ENCODE measurements at regions of chr5 and their contacts with region 1.

Region 1: GRCh38 chr5:150560401-150561193 is 52.7 kb downstream of the NDST1 start:
- DNase-seq: peak; percentile 82
- ATAC-seq: peak; percentile 74
- H3K4me3 ChIP-seq: no peak overlapping the region
- H3K27ac ChIP-seq: no peak overlapping the region
- H3K4me1 ChIP-seq: peaks cover 25% of the 10 kb centered on the region
- H3K27me3 ChIP-seq: no peaks in the 10 kb centered on the region
- CTCF ChIP-seq: peak; percentile 81
- EP300 ChIP-seq: no peak
- POLR2A ChIP-seq: no peak
- RAD21 ChIP-seq: peak; percentile 72

Region 2: DNA sequence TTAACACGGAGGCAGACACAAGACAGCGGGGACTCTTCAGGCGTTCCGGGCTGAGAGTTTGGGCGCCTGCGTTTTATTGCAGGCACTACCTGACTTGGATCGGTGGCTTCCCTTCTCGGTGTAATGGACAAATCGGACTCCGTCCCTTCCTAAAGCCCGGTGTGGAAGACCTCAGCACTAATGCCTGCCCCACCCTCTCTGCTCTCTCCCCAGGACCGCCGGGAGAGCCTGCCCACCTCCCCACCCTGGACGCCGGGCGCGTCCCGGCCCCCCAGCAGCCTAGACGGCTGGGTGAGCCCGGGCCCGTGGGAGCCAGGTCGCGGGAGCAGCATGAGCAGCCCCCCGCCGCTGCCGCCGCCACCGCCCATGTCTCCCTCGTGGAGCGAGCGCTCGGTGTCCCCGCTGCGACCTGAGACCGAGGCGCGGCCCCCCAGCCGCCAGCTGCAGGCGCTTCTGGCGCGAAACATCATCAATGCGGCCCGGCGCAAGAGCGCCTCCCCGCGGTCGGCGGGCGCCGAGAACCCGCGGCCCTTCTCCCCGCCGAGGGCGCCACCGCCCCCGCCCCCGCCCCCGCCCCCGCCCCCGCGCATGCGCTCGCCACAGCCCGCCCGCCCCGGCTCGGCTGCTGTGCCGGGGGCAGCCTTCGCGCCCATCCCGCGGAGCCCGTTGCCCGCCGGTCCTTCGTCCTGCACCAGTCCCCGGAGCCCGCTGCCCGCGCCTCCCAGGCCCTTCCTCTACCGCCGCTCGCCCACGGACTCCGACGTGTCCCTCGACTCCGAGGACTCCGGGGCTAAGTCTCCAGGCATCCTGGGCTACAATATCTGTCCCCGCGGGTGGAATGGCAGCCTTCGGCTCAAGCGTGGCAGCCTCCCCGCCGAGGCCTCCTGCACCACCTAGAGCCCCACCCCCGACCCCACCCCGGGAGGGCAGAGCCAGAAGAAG is 95.9 kb after region 1 on chr5:
- CTCF ChIA-PET with region 1: interaction called, 16 read pairs
- POLR2A ChIA-PET with region 1: no interaction called
- in situ Hi-C with region 1: loop called (anchors 5 kb)
- intact Hi-C with region 1: loop called (anchors 1 kb)
- DNase-seq: peak; percentile 35
- ATAC-seq: peak; percentile 61
- H3K4me3 ChIP-seq: peak overlapping the region; percentile 49 to 75 (median 60)
- H3K27ac ChIP-seq: no peak overlapping the region
- H3K4me1 ChIP-seq: peaks cover 18% of the 10 kb centered on the region
- H3K27me3 ChIP-seq: peaks cover 2 to 21% of the 10 kb centered on the region in 2 experiments; a peak in 2 of 5 replicates
- CTCF ChIP-seq: peak; percentile 78
- EP300 ChIP-seq: no peak
- POLR2A ChIP-seq: no peak
- RAD21 ChIP-seq: peak; percentile 87

Region 3: DNA sequence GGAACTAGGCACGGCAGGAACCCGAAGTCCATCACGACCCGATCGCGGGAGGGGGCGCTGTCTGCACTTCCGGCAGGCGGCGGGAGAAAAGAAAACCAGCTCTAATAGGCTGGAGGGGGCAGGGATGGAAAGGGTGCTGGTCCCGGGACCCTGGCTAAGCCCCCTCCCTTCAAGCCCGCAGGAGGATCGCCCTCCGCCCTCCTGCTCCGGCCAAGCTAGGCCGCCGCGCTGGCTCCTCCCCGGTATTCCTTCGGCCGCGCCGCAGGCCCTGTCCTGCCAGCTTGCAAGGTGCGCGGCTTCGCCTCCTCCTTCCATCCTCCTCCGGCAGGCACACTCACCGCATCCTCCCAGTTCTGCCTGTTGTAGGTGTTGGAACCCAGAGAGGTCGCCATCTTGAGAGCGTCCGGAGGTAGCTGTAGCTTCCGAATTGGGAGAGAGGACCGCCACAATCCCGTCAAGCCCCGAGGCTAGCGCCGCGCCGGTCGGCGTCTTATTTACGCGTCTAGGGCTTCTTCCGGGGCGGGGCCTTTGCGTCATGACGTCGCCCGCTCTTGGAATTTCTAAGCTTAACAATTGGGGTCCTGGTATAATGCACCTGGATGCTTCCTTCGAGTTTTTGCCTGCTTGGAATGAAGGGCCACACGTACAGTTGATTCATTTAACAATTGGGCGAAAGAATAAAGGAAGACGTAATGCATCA is 140.1 kb after region 1 on chr5 and contains the start of gene RBM22:
- CTCF ChIA-PET with region 1: interaction called, 5 read pairs
- POLR2A ChIA-PET with region 1: interaction called, 3 read pairs
- in situ Hi-C with region 1: no loop called
- intact Hi-C with region 1: loop called (anchors 2 kb)
- DNase-seq: peak; percentile 77
- ATAC-seq: peak; percentile 97
- H3K4me3 ChIP-seq: peak within 1 kb of the TSS; percentile 97 to 100 (median 99)
- H3K27ac ChIP-seq: peak within 1 kb of the TSS; percentile 84
- H3K4me1 ChIP-seq: peaks cover 21% of the 10 kb centered on the region
- H3K27me3 ChIP-seq: no peaks in the 10 kb centered on the region; a peak in 1 of 5 replicates
- CTCF ChIP-seq: peak; percentile 72
- EP300 ChIP-seq: 0 out of 4 replicates have a peak, but pooled peaks of 1 of the 2 experiments have one; percentile 19
- POLR2A ChIP-seq: peak; percentile 73 to 85
- RAD21 ChIP-seq: peak; percentile 7; the same call in 1 of the 2 replicates
- total RNA-seq, gene RBM22: 27.7 and 28.3 TPM in 2 replicates

Region 4: GRCh38 chr5:150710165-150710564 is 149.6 kb after region 1 on chr5:
- CTCF ChIA-PET with region 1: interaction called, 11 read pairs
- POLR2A ChIA-PET with region 1: no interaction called
- in situ Hi-C with region 1: no loop called
- intact Hi-C with region 1: loop called (anchors 2 kb)
- DNase-seq: no peak
- ATAC-seq: peak; percentile 49; the same call in 2 of the 3 replicates
- H3K4me3 ChIP-seq: no peak overlapping the region
- H3K27ac ChIP-seq: no peak overlapping the region
- H3K4me1 ChIP-seq: no peaks in the 10 kb centered on the region
- H3K27me3 ChIP-seq: no peaks in the 10 kb centered on the region
- CTCF ChIP-seq: peak; percentile 49
- EP300 ChIP-seq: no peak
- POLR2A ChIP-seq: no peak
- RAD21 ChIP-seq: no peak

Region 5: DNA sequence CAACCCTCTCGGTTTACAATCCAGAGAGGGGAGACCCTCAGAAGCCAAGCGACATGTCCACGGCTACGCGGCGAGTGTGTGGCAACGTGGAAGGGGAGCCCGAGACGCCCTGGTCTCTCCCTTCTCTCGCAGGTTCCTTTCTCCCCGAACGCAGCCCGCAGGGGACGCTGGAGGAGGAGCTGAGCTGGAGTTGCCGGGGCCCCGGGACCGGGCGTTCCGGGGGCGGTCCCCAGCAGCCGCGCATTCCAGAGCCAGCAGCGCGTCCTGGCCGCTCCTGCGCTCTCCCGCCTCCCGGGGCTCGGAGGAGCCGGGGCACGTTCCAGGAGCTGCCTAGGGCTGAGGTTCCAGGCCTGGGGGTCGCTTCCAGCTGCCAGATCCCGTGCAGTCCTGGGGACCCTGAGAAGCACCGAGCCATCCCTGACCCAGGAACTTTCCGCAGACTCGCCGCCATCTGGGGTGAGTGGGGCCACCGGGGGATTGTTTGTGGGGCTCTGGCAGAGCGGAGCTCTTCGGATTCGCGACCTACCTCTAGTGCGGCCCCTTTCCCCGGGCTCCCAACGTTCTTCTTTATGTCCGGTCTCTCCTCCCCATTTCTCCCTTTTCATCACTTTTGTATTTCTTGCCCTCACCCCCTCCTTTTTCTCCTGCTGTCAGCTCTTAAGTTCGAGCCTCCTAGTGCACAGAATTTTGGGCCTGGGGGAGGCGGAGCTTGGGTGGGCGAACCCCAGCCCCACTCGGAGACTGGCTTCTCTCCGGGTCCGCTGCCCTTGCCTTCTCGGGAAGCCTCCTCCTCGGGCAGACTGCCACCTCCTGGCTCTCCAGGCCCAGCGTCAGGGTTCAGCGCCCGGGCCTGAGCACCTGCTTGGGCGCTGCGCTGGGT is 218.2 kb after region 1 on chr5 and contains the start of gene SMIM3:
- CTCF ChIA-PET with region 1: no interaction called
- POLR2A ChIA-PET with region 1: no interaction called
- in situ Hi-C with region 1: no loop called
- intact Hi-C with region 1: loop called (anchors 5 kb)
- DNase-seq: peak; percentile 47
- ATAC-seq: peak; percentile 87
- H3K4me3 ChIP-seq: peak within 1 kb of the TSS; percentile 74 to 90 (median 79)
- H3K27ac ChIP-seq: peak within 1 kb of the TSS; percentile 51
- H3K4me1 ChIP-seq: peaks cover 59% of the 10 kb centered on the region
- H3K27me3 ChIP-seq: no peaks in the 10 kb centered on the region; a peak in 1 of 5 replicates
- CTCF ChIP-seq: peak; percentile 84
- EP300 ChIP-seq: no peak
- POLR2A ChIP-seq: peak in 1 of 2 experiments; percentile 77; a peak in 2 of 4 replicates
- RAD21 ChIP-seq: peak; percentile 53
- total RNA-seq, gene SMIM3: 11.6 and 14.1 TPM in 2 replicates

Region 6: DNA sequence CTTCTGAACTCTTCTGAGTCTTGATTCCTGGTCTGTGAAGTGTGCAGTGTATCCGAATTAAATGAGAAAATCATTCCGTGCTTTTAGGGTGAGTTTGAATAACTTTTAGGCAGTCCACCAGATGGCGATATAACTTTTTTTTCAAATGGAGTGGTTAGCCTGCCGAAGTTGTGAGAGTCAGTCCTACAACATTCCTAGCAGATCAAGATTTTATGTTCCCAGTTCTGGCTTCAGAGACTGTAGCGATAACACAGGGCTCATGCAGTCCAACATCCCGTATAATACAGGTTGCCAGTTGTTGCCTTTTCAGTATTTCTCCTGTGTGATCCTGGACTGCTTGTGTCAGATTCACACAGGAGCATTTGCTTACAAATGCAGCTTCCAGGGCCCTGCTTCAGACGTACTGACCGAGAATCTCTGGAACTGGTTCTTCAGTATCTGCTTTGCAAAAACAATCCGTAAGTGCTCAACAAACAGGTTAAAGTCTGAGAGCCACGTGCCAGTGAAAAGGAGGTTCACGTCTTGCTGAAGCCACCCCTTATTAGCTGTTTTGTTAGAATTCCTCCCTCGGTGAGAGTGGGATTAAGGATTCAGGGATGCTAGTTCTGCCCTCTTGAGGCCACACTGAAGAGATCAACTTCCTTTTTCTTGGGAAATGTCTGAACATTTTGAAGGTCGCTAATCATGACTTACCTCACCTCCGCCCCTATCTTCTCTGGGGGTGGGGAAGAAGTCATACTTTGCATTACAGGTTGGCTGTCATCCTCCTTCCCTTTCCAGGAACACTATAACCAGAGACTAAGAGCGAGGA is 240.7 kb after region 1 on chr5:
- CTCF ChIA-PET with region 1: no interaction called
- POLR2A ChIA-PET with region 1: no interaction called
- in situ Hi-C with region 1: no loop called
- intact Hi-C with region 1: no loop called
- DNase-seq: peak; percentile 62
- ATAC-seq: peak; percentile 95
- H3K4me3 ChIP-seq: peak overlapping the region; percentile 48 to 66 (median 65); a peak in 5 of 6 replicates
- H3K27ac ChIP-seq: no peak overlapping the region
- H3K4me1 ChIP-seq: peaks cover 14% of the 10 kb centered on the region
- H3K27me3 ChIP-seq: no peaks in the 10 kb centered on the region; a peak in 1 of 5 replicates
- CTCF ChIP-seq: peak; percentile 68
- EP300 ChIP-seq: no peak; a peak in 1 of 4 replicates
- POLR2A ChIP-seq: no peak
- RAD21 ChIP-seq: 0 out of 2 replicates have a peak, but pooled peaks have one; percentile 11

Region 7: DNA sequence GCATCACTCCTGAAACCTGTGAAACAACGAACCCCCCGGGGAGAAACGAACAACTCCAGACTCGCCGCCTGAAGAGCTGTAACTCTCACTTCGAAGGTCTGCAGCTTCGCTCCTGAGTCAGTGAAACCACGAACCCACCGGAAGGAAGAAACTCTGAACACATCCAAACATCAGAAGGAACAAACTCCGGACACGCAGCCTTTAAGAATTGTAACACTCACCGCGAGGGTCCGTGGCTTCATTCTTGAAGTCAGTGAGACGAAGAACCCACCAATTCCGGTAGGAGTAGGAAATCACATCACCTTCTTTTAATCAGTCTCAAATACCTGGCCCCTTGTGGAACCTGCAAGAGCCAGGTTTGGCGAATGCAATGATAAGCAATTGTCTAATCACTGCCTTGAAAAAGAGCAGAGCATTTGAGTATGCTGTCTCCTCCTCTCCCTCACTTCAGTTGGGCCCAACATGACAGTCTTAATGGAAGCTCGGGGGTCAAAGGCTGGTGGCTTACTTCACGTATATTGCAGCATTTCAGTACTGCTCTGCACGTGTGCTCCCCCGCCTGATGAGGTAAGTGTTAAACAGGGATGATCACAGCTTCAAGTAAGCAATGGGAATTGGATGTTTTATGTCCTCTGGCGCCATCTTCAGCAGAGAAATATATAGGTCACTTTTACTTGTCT is 286.2 kb after region 1 on chr5:
- CTCF ChIA-PET with region 1: interaction called, 16 read pairs
- POLR2A ChIA-PET with region 1: no interaction called
- in situ Hi-C with region 1: loop called (anchors 5 kb)
- intact Hi-C with region 1: loop called (anchors 1 kb)
- DNase-seq: peak; percentile 78
- ATAC-seq: peak; percentile 93
- H3K4me3 ChIP-seq: no peak overlapping the region
- H3K27ac ChIP-seq: no peak overlapping the region
- H3K4me1 ChIP-seq: no peaks in the 10 kb centered on the region
- H3K27me3 ChIP-seq: peaks cover 0 to 10% of the 10 kb centered on the region in 2 experiments; a peak in 1 of 5 replicates
- CTCF ChIP-seq: peak; percentile 90
- EP300 ChIP-seq: no peak
- POLR2A ChIP-seq: no peak
- RAD21 ChIP-seq: peak; percentile 52; the same call in 1 of the 2 replicates

Measured in HepG2 (cell line).